ENCODE measurements at regions of chr14 and their contacts with region 1.

Region 1: DNA sequence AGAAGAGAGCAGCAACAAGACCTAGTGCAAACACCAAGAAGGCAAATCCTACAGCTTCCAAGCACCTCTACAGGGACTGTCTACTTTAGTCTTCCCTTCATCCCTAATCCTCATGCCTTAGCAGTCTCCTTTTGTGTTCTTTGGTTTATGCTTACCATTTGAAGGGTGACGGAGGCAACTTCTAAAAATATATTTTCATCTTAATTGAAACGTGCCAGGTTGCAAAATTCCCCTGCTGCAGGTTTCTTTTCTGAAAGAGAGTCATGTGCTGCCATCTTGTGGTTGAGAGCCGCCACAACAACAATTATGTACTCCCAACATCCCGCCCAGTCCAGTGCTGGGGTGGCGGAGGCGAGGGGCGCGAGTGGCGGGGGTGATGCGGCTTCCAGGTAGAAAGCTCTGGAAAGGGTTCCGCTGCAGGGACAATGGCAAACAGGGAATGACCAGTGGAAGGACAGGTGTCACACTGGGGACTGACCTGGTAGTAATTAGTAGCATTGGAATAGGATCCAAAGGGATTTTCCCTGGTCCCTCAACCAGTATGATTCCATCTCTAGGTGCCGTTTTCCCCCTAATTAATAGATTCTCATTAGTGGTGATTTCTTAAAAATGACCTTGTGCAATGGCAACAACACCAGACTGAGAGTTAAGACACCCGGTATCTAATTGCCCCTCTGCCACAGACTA is 80.3 kb upstream of the GNG2 start:
- DNase-seq: no peak
- H3K4me3 ChIP-seq: no peak overlapping the region
- H3K27me3 ChIP-seq: peaks cover 4% of the 10 kb centered on the region
- CTCF ChIP-seq: peak; percentile 77

Region 2: GRCh38 chr14:51269634-51270033 is 510.5 kb before region 1 on chr14:
- CTCF ChIA-PET with region 1: interaction called, 21 read pairs
- POLR2A ChIA-PET with region 1: no interaction called
- DNase-seq: no peak
- H3K4me3 ChIP-seq: no peak overlapping the region
- H3K27me3 ChIP-seq: no peaks in the 10 kb centered on the region
- CTCF ChIP-seq: no peak

Region 3: GRCh38 chr14:51277753-51278415 is 502.3 kb before region 1 on chr14:
- CTCF ChIA-PET with region 1: interaction called, 310 read pairs
- POLR2A ChIA-PET with region 1: no interaction called
- DNase-seq: no peak
- H3K4me3 ChIP-seq: no peak overlapping the region
- H3K27me3 ChIP-seq: no peaks in the 10 kb centered on the region
- CTCF ChIP-seq: no peak

Region 4: GRCh38 chr14:51283402-51284085 is 496.6 kb before region 1 on chr14:
- CTCF ChIA-PET with region 1: interaction called, 310 read pairs
- POLR2A ChIA-PET with region 1: no interaction called
- DNase-seq: peak; percentile 77
- H3K4me3 ChIP-seq: no peak overlapping the region
- H3K27me3 ChIP-seq: no peaks in the 10 kb centered on the region
- CTCF ChIP-seq: peak; percentile 67

Region 5: GRCh38 chr14:51576117-51576430 is 204.1 kb before region 1 on chr14:
- CTCF ChIA-PET with region 1: no interaction called
- POLR2A ChIA-PET with region 1: no interaction called
- DNase-seq: no peak
- H3K4me3 ChIP-seq: no peak overlapping the region
- H3K27me3 ChIP-seq: no peaks in the 10 kb centered on the region
- CTCF ChIP-seq: no peak

Region 6: GRCh38 chr14:51651388-51652167 is 128.6 kb before region 1 on chr14 and contains the start of gene FRMD6:
- CTCF ChIA-PET with region 1: interaction called, 25 read pairs
- POLR2A ChIA-PET with region 1: no interaction called
- DNase-seq: peak; percentile 38
- H3K4me3 ChIP-seq: peak within 1 kb of the TSS; percentile 87
- H3K27me3 ChIP-seq: no peaks in the 10 kb centered on the region
- CTCF ChIP-seq: peak; percentile 55
- polyA plus RNA-seq, gene FRMD6: 507 and 540 TPM in 2 replicates

Region 7: DNA sequence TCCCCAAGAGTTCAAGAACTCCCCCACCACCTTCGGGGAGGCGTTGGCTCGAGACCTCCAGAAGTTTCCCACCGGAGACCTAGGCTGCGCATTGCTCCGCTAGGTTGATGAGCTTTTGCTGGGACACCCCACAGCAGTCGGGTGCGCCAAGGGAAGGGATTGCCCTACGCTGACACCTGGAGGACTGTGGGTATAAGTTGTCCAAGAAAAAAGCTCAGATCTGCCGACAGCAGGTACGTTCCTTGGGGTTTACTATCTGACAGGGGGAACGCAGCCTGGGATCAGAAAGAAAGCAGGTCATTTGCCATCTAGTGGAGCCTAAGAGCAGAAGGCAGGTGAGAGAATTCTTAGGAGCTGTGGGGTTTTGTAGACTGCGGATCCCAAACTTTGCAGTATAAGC is 29.6 kb before region 1 on chr14:
- CTCF ChIA-PET with region 1: interaction called, 10 read pairs
- POLR2A ChIA-PET with region 1: no interaction called
- DNase-seq: no peak
- H3K4me3 ChIP-seq: no peak overlapping the region
- H3K27me3 ChIP-seq: no peaks in the 10 kb centered on the region
- CTCF ChIP-seq: no peak

Region 8: DNA sequence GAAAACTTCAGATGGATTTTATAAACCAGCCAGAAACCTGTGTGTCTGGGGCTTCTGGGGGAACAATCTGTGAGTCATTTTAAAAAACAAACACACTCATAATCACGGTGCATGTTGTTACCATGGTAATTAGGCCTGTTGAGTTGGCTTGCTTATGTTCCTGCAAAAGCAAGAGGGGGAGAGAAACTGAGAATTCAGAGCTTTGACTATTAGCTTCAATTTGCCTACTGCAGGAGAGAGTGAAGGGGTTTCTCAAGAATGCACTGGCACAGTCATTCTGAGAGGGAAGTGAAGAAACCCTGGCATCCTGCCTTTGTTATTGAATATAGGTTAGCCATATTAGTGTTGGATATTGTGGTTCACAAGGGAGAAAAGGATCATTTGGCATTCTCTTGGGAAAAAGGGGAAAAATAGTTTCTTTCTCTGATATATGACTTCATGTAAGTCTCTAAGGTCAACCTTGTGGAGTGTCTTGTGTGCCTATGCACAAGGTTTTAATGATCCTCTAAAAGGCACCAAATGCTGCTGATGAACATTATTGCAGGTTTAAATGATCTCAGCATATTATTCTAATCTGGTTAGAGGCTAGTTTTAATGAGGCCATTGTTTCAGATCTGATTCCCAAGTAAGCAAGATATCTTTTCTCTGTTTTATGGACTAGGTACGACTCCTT is 93.2 kb after region 1 on chr14:
- CTCF ChIA-PET with region 1: no interaction called
- POLR2A ChIA-PET with region 1: no interaction called
- DNase-seq: peak; percentile 98
- H3K4me3 ChIP-seq: no peak overlapping the region
- H3K27me3 ChIP-seq: no peaks in the 10 kb centered on the region
- CTCF ChIP-seq: no peak

Region 9: DNA sequence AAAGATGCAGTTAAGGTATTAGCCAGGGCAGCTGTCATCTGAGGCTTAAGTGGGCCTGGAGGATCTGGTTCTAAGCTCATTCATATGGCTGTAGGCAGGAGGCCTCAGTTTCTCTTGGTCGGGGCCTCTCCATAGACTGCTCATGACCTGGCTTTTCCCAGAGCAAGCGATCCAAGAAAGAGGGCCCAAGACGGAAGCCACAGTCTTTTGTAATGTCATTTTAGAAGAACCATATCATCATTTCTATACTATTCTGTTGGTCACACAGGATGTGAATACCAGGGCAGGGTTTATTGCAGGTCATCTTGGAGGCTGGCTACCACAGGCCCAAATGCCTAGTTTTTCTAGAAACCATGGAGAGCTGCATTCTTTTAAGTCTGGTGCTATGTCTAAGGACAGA is 127.9 kb after region 1 on chr14:
- CTCF ChIA-PET with region 1: no interaction called
- POLR2A ChIA-PET with region 1: no interaction called
- DNase-seq: no peak
- H3K4me3 ChIP-seq: no peak overlapping the region
- H3K27me3 ChIP-seq: no peaks in the 10 kb centered on the region
- CTCF ChIP-seq: no peak

Region 10: DNA sequence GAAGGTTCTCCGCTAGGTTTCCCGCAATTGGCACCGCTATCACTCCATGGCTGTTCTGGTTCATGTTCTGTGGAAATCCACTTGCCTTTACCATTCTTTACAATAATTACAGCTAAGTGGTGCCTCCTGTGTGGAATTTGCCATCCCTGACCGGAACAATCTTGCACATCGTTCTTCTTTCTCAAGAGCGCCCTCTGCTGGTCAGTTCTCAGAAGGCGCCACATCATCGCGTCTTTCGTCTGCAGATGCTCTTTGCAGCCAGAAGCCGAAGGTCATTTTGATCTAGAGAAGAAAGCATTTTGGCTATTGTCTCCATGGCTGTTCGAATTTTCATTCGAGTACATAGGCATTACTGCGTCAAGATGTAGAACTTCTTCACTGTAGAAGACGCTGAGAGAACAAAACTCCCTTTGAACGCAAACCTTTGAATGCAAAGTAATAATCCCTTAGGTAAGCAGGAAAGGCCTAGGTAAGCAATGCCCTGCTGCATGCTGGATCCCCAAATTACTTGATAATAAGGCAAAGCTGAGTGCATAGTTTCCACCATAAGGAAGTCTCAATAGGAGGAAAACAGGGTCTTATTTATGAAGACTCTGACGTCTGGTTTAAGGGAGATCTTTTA is 199.1 kb after region 1 on chr14:
- CTCF ChIA-PET with region 1: interaction called, 70 read pairs
- POLR2A ChIA-PET with region 1: no interaction called
- DNase-seq: no peak
- H3K4me3 ChIP-seq: no peak overlapping the region
- H3K27me3 ChIP-seq: peaks cover 4% of the 10 kb centered on the region; the same call in 1 of the 2 replicates
- CTCF ChIP-seq: peak; percentile 90

Measured in BJ (cell line).